ENCODE measurements at regions of chr10 and their contacts with region 1.

Region 1: GRCh38 chr10:101272229-101272868 is 43.1 kb upstream of the LBX1 start:
- DNase-seq: peak; percentile 44 to 49
- ATAC-seq: peak; percentile 67 to 86 (median 79)
- H3K4me3 ChIP-seq: no peak overlapping the region
- H3K27ac ChIP-seq: no peak overlapping the region
- H3K4me1 ChIP-seq: no peaks in the 10 kb centered on the region
- H3K27me3 ChIP-seq: peaks cover 0 to 37% (median 23%) of the 10 kb centered on the region in 7 donors
- CTCF ChIP-seq: peak; percentile 48 to 82 (median 79)

Region 2: GRCh38 chr10:101207026-101207425 is 65.3 kb before region 1 on chr10:
- intact Hi-C with region 1: no loop called
- DNase-seq: no peak
- ATAC-seq: no peak
- H3K4me3 ChIP-seq: no peak overlapping the region
- H3K27ac ChIP-seq: no peak overlapping the region
- H3K4me1 ChIP-seq: no peaks in the 10 kb centered on the region
- H3K27me3 ChIP-seq: peaks cover 4 to 97% (median 78%) of the 10 kb centered on the region in 7 donors
- CTCF ChIP-seq: no peak

Region 3: GRCh38 chr10:101319241-101319915 is 47.0 kb after region 1 on chr10:
- intact Hi-C with region 1: no loop called
- DNase-seq: no peak
- ATAC-seq: peak in 1 of 8 donors; percentile 13
- H3K4me3 ChIP-seq: no peak overlapping the region
- H3K27ac ChIP-seq: no peak overlapping the region
- H3K4me1 ChIP-seq: no peaks in the 10 kb centered on the region
- H3K27me3 ChIP-seq: peaks cover 0 to 16% (median 0%) of the 10 kb centered on the region in 7 donors
- CTCF ChIP-seq: no peak

Region 4: GRCh38 chr10:101467286-101467770 is 195.0 kb after region 1 on chr10:
- intact Hi-C with region 1: loop called in 1 of 10 experiments (anchors 10 kb)
- DNase-seq: peak in 1 of 2 donors; percentile 46
- ATAC-seq: peak; percentile 69 to 87 (median 82)
- H3K4me3 ChIP-seq: no peak overlapping the region
- H3K27ac ChIP-seq: no peak overlapping the region
- H3K4me1 ChIP-seq: peaks cover 0 to 36% (median 20%) of the 10 kb centered on the region in 9 donors
- H3K27me3 ChIP-seq: no peaks in the 10 kb centered on the region
- CTCF ChIP-seq: peak; percentile 43 to 87 (median 73)